ENCODE measurements at regions of chr7 and their contacts with region 1.

Region 1: DNA sequence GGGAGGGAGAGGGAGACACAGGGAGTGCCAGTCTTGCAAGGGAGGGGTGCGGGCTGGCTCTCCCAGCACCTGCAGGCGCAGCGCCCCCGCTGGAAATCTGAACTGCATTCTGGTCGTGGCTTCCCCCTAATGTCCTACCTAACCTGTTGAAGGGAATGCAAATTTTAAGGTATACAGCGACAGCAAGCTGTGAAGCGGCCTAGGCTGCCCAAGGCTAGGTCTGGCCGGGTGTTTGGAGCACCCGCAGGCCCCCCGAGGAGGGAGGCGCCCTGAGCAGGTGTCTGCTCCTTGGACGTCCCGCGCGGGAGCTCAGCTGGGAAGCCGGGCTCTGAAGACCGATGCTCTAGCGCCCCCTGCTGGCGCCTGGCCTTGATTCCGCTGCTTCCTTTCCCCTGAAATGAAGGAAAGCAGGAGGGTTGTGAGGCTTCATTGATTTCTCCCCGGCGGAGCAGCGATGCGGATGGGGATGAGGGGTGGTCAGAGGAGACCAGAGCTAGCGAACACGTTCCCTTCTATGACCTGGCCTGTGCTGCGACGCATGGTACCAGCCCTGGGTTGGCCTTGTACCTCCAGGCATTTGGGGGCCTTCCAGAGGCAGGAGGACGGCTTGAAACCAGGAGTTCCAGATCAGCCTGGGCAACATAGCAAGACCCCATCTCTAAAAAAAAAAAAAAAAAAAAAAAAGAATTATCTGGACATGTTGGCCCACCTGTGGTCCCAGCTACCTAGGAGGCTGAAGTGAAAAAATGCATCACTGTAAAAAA is 601.3 kb downstream of the GALNT17 start:
- DNase-seq: peak; percentile 81
- ATAC-seq: peak; percentile 76

Region 2: DNA sequence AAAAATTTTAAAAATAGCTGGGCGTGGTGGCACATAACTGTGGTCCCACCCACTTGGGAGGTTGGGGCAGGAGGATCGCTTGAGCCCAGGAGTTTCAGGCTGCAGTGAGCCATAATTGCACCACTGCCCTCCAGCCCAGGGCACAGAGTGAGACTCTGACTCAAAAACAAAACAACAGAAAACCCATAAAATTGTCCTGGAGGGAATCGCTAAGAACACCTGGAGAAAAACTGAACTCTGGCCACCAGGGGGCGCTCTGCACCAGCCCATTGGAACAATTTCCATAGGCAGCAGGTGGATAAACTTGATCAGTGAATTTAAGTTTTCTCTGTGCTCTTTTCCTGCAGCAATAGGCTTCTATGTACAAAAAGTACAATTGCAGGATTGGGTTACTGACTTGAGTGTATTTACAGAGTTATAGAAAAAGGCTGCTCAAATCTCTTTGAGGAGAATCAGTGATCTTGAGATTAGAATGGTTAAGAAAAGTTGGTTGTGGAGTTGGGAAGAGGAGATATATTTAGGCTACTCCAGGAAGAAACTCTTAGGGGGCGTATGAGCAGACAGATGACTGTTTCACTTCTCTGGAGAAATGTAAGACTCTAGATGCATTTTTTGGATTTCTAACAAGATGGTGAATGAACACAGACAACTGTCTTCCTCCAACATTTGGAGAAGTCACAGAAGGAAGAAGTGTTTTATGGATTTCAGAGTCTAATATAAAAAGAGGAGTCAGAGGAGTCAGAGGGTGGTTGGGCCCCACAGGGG is 876.2 kb before region 1 on chr7:
- intact Hi-C with region 1: loop called (anchors 2 kb)
- DNase-seq: peak; percentile 62
- ATAC-seq: no peak

Region 3: GRCh38 chr7:71239586-71240268 is 493.6 kb before region 1 on chr7:
- intact Hi-C with region 1: loop called in 1 of 2 experiments (anchors 5 kb)
- DNase-seq: no peak
- ATAC-seq: peak; percentile 44 to 70

Region 4: DNA sequence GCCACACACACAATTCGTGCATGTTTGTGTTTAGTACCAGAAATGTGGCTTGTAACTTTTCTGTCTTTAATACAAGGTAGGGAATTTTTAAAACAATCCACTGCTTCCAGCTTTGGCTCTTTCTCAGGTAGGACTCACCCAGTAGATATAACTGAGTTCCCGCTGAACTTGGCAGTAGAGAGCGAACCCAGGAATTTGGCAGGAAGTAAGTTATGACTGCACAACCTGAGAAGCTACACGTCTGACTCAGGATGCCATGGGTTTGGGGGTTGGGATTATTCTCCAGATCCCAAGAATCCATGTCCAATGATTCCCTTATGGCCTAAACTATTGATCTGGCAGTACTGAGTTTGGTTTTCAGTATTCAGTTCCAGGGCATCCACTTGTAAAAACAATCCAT is 179.2 kb after region 1 on chr7:
- intact Hi-C with region 1: no loop called
- DNase-seq: no peak
- ATAC-seq: no peak

Measured in left cardiac atrium (tissue), 4 donors.